ENCODE measurements at regions of chr1 and their contacts with region 1.

Region 1: DNA sequence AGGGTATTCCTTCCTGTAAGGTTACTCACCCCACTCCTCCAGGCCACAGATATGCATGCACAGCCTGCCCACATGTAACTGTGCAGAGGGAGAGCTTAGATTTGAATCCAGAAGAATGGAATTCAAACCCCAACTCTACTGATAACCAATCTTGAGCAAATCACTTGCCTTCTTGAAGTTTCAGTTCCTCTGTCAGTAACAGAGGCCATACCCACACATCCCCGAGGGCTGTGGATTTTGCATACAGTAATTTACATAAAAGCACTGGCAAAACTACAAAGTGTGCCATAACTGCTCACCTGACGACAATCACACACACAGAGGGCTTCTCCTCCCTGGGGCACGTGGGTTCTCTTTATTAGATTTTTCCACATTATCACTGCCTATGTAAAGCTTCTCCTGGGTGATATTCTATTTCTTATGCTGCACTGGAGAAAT is 18.6 kb downstream of the CD247 start:
- DNase-seq: peak; percentile 88
- ATAC-seq: peak; percentile 98
- H3K4me3 ChIP-seq: peak overlapping the region in 1 of 5 experiments; percentile 34
- H3K4me3 Mint-ChIP-seq: peak overlapping the region; percentile 68
- H3K27ac ChIP-seq: no peak overlapping the region
- H3K27ac Mint-ChIP-seq: peak overlapping the region; percentile 18
- H3K4me1 ChIP-seq: peaks cover 39% of the 10 kb centered on the region in 2 donors
- H3K4me1 Mint-ChIP-seq: peaks cover 39% of the 10 kb centered on the region
- H3K27me3 ChIP-seq: peaks cover 0 to 66% (median 55%) of the 10 kb centered on the region in 4 experiments
- H3K27me3 Mint-ChIP-seq: peaks cover 75% of the 10 kb centered on the region
- CTCF ChIP-seq: no peak

Region 2: GRCh38 chr1:167454894-167455785 is 44.5 kb before region 1 on chr1:
- CTCF ChIA-PET with region 1: interaction called, 3 read pairs
- POLR2A ChIA-PET with region 1: interaction called, 10 read pairs
- intact Hi-C with region 1: loop called (anchors 1 kb)
- DNase-seq: peak; percentile 78
- ATAC-seq: peak; percentile 78
- H3K4me3 ChIP-seq: peak overlapping the region; percentile 50 to 82 (median 77)
- H3K4me3 Mint-ChIP-seq: peak overlapping the region; percentile 79
- H3K27ac ChIP-seq: peak overlapping the region in 1 of 2 donors; percentile 66
- H3K27ac Mint-ChIP-seq: no peak overlapping the region
- H3K4me1 ChIP-seq: peaks cover 3 to 23% of the 10 kb centered on the region in 2 donors
- H3K4me1 Mint-ChIP-seq: peaks cover 14% of the 10 kb centered on the region
- H3K27me3 ChIP-seq: peaks cover 0 to 6% (median 0%) of the 10 kb centered on the region in 4 experiments
- H3K27me3 Mint-ChIP-seq: peaks cover 4% of the 10 kb centered on the region
- CTCF ChIP-seq: no peak

Measured in B cell (primary cell).